Right cardiac atrium (tissue), 5 donors: ENCODE measurements at regions of chr12 and their contacts with region 1.

Region 1: DNA sequence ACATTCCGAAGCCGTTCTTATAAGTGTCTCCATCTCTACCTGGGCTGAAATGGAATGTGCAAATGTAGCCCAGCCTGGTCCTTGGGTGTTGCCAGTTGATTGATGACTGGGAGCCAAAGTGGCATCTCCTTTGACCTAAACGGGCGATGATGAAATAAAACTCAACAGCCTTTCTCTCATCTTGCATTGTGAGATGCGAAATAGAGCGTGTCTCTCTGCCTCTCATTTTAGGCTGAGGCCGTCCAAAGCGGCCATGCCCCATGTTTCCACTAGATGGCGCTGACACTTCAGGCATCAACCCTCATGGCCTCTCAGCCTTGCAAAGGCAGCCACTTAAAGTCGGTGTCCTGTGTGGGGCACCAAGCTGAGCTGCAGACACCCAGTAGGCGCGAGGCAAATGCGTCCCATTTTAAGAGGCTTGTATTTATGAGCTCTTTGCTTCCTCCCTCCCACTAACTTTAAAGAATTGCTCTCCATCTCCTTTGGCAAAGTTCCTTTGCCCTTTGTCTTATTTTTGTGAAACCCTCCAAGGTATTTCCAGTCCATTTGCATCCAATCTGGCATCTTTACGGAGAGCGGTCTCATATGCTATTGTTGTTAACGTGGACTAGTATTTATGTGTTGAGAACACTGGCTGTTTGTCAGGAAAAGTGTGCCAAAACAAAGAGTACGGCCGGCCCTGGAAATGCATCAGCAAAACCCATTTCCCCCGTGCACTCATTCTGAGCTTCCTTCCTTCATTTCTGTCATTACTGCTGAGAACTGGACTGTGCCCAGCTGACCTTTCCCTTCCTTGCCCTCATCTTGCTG is 25.0 kb downstream of the GPRC5A start:
- DNase-seq: peak; percentile 83 to 95 (median 92)
- ATAC-seq: peak; percentile 95
- H3K4me3 ChIP-seq: no peak overlapping the region
- H3K27ac ChIP-seq: peak overlapping the region; percentile 6
- H3K4me1 ChIP-seq: no peaks in the 10 kb centered on the region
- H3K27me3 ChIP-seq: no peaks in the 10 kb centered on the region

Region 2: DNA sequence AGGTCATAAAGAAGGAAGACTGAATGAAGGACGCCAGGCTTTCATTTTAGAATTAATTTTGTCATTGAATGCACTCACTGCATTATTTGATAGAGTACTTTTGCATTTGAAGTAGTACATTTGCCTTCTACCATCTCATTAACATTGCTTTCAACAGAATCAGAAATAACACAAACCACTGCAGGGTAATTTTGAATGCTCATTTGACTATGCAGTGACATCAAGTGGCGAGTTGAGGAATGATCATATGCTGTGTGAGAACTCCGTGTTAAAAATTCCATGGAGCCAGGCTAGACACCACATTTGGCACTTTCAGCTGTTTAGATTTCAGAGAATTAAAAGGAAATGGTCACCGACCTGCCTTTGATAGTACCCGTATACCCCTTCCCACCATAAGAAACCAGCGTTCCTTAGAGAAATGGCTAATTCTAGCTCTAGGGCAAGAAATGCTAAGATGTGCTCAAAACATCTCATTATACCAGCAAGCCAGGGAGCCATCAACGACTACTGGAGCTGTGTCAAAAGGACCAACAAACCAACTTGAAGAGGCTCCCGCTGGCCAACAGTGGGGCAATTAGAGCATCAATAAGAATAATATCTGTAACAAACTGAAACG is 67.2 kb after region 1 on chr12:
- intact Hi-C with region 1: loop called (anchors 5 to 10 kb)
- DNase-seq: no peak
- ATAC-seq: peak; percentile 62 to 75
- H3K4me3 ChIP-seq: no peak overlapping the region
- H3K27ac ChIP-seq: no peak overlapping the region
- H3K4me1 ChIP-seq: peaks cover 7% of the 10 kb centered on the region
- H3K27me3 ChIP-seq: no peaks in the 10 kb centered on the region

Region 3: GRCh38 chr12:13033476-13033875 is 117.1 kb after region 1 on chr12:
- intact Hi-C with region 1: no loop called
- DNase-seq: no peak
- ATAC-seq: no peak
- H3K4me3 ChIP-seq: no peak overlapping the region
- H3K27ac ChIP-seq: no peak overlapping the region
- H3K4me1 ChIP-seq: no peaks in the 10 kb centered on the region
- H3K27me3 ChIP-seq: no peaks in the 10 kb centered on the region

Region 4: DNA sequence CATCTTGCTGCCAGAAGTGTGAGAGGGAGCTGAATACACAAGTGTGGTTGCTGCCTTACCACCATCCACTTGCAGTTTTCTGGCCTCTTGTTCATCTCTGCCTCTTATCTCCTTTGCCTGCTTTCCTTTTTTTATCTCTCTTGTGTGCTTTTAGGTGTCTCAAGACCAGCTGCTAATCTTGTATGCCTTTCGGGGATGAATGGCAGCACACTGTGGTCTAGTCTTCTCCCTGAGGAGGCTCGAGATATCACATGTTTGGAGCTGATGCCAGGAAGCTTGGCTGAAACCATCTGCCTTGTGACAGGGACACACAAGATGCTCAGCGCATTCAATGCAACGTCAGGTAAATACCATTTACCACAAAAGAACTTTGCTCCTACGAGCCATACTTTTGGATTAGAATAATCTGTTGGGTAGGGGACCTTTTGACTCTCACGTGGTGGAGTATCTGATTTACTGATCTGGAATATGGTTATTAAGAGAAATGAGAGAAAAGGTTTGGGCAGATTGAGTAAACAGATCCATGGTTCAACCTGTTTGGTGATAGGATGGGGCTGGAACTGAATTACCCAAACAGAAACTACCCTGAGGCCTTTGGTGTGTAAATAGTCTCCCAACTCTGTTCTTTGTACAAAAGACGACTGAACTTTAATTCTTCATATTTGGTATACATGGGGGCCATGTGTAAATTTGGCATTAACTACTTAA is 145.2 kb after region 1 on chr12:
- intact Hi-C with region 1: no loop called
- DNase-seq: no peak
- ATAC-seq: no peak
- H3K4me3 ChIP-seq: no peak overlapping the region
- H3K27ac ChIP-seq: no peak overlapping the region
- H3K4me1 ChIP-seq: no peaks in the 10 kb centered on the region
- H3K27me3 ChIP-seq: no peaks in the 10 kb centered on the region

Region 5: GRCh38 chr12:13094347-13094746 is 178.0 kb after region 1 on chr12:
- intact Hi-C with region 1: loop called in 2 of 4 experiments (anchors 5 to 10 kb)
- DNase-seq: no peak
- ATAC-seq: no peak
- H3K4me3 ChIP-seq: no peak overlapping the region
- H3K27ac ChIP-seq: no peak overlapping the region
- H3K4me1 ChIP-seq: peaks cover 7% of the 10 kb centered on the region
- H3K27me3 ChIP-seq: no peaks in the 10 kb centered on the region

Region 6: DNA sequence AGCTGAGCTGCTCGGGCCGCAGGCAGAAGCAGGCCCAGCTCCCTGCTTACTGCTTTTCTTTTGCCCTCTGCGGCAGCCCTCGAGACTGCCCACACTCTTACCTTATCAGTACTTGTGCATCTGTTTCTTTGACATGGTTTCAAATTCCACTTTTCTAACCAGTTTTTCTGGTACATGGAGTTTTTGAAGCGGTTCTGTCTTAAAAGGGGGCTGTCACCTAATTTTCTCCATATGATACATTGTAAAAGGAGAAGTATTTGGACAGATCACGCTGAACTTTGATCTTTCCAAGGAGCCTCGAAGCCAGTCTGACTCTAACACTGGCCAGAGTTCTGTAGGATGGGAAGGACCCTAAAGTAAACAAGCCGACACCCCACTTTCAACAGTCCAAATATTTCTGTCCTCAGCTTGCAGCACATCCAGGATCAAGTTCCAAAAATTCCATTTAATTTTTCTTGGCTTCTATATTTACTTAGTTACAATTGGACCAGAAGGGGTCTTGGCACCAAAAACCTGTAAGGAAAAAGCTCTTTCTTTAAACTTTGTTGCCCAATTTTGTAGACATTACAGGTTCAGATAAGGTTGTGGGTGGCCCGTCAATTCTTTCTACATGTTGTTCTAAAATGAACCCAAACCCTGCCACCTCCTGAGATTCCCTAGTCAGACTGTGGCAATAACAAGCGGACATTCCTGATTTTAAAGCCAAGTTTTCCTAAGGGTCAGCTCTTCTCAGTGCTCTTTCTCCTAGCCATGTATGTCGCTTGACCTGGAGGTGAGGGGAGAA is 231.9 kb after region 1 on chr12:
- intact Hi-C with region 1: no loop called
- DNase-seq: peak; percentile 35 to 77 (median 72)
- ATAC-seq: peak; percentile 39 to 60
- H3K4me3 ChIP-seq: no peak overlapping the region
- H3K27ac ChIP-seq: peak overlapping the region; percentile 50
- H3K4me1 ChIP-seq: peaks cover 3% of the 10 kb centered on the region
- H3K27me3 ChIP-seq: no peaks in the 10 kb centered on the region

Region 7: DNA sequence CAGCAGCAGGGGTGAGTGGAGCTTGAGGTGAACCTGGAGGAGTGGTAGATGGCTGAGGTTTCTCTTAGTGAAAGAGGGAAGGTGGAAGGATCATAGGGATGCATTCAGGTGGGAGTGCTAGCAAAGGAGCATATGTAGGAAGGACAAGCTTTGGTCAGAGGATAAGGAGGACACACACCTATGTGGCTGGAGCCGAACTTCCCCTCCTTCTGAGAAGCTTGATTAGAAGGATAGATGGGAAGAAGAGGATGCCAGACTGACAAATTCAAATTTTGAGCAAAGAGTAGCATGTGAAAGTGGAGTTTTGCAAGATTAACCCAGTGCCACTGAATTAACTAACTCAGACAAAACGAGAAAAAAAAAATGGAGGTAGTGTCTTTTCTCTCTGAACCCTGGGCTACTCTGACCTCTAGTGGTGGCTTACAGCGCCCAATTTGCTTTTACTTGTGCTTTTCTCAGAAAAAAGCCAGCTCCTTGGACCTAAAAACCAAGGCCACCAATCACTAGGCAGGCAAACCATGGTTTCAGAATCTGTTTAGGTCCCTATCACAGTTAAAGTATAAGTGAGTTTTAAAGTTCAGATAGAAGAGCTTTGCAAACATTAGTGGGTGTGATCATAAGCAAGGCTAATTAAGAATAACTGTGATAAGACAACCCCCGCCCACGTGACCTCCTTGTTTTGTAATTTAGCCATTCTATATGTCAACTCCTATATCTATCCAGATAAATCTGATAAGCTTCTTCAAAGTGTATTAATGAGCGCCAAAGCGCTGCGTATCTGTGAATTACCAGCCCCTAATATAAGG is 295.7 kb after region 1 on chr12:
- intact Hi-C with region 1: loop called in 3 of 4 experiments (anchors 5 to 10 kb)
- DNase-seq: peak in 2 of 3 donors; percentile 33 to 69
- ATAC-seq: peak in 1 of 2 donors; percentile 13
- H3K4me3 ChIP-seq: no peak overlapping the region
- H3K27ac ChIP-seq: peak overlapping the region; percentile 48
- H3K4me1 ChIP-seq: peaks cover 15% of the 10 kb centered on the region
- H3K27me3 ChIP-seq: no peaks in the 10 kb centered on the region

Region 8: GRCh38 chr12:13223179-13223859 is 307.0 kb after region 1 on chr12:
- intact Hi-C with region 1: loop called in 1 of 4 experiments (anchors 10 kb)
- DNase-seq: no peak
- ATAC-seq: no peak
- H3K4me3 ChIP-seq: no peak overlapping the region
- H3K27ac ChIP-seq: no peak overlapping the region
- H3K4me1 ChIP-seq: peaks cover 3% of the 10 kb centered on the region
- H3K27me3 ChIP-seq: no peaks in the 10 kb centered on the region

Region 9: DNA sequence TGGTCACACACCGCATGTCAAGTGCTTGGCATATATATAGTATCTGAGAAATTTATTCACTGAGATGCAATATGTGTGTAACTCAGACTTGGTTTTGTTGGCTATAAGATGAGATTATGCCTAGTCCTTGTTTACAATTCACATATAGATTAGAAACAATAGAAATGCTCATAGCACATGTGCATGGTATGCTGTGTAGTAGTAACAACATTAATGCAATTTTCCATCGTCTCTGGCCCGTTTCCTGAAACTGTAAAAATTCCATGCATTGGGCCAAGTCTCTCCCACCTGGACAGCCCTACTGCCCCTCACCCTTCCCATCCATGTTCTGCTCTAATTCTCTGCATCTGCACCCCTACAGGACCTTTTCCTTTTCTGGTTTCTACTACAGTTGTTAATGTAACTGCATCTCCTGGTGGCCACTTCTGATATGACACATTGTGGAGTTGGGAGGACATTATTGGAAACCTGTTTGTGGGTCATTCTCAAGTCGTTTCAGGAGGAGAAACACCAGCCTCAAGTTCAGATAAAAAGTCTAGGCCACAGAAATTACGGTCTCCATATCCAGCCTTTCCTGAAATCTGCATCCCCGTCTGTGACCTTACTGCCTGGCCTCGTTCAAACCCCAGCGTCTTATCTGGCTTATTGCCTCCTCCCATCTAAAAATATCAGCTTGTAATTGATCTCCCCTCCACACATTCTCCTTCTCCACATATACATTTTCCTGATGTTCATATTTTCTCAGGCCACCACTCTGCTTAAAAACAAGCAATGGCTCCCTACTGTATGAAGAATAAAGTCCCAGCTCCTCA is 317.7 kb after region 1 on chr12:
- intact Hi-C with region 1: loop called in 3 of 4 experiments (anchors 5 to 10 kb)
- DNase-seq: peak in 2 of 3 donors; percentile 29 to 56
- ATAC-seq: peak; percentile 69 to 71
- H3K4me3 ChIP-seq: no peak overlapping the region
- H3K27ac ChIP-seq: no peak overlapping the region
- H3K4me1 ChIP-seq: no peaks in the 10 kb centered on the region
- H3K27me3 ChIP-seq: no peaks in the 10 kb centered on the region